T-cell (primary cell): ENCODE measurements at regions of chr11 and their contacts with region 1.

Region 1: DNA sequence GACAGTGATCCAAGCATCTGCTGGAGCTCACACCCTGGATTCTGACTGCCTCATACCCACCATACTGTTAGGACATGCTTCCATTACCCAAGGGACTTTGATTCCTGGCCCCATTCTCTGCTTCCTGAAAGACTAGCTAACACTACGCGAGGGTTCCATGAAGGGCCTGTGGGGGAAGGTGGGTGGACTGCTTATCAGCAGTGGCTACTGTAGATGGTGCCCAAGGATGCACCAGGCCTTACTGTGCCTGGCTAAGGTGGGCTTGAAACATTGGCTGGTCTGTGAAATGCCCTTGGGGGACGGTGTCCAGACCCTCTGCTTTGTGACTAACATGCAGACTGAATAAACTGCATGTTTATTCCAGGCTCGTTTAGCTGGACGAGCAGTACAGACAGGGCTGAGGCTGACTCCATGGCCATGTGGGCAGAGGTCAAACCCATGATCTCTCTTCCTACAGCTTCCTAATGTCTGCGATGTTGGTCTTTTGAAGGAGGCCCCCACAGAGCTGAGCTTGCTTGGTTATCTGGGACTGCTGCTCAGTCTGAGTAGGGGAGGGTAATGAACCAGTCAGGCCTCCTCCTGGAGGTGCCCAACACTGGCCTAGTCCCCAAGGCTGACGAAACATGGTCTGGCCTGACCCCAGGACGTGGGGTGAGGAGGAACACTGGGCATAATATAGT is 48.3 kb upstream of the PHOX2A start:
- DNase-seq: no peak
- ATAC-seq: no peak
- H3K4me3 ChIP-seq: no peak overlapping the region
- H3K4me3 Mint-ChIP-seq: no peak overlapping the region
- H3K27ac ChIP-seq: no peak overlapping the region
- H3K27ac Mint-ChIP-seq: no peak overlapping the region
- H3K4me1 ChIP-seq: no peaks in the 10 kb centered on the region
- H3K4me1 Mint-ChIP-seq: no peaks in the 10 kb centered on the region
- H3K27me3 ChIP-seq: no peaks in the 10 kb centered on the region
- H3K27me3 Mint-ChIP-seq: no peaks in the 10 kb centered on the region

Region 2: GRCh38 chr11:72446902-72447769 is 154.9 kb after region 1 on chr11:
- CTCF ChIA-PET with region 1: interaction called in 1 of 2 experiments, 12 read pairs
- POLR2A ChIA-PET with region 1: no interaction called
- DNase-seq: peak in 2 of 35 experiments; percentile 26 to 65
- ATAC-seq: peak; percentile 54 to 68 (median 55)
- H3K4me3 ChIP-seq: no peak overlapping the region
- H3K4me3 Mint-ChIP-seq: no peak overlapping the region
- H3K27ac ChIP-seq: no peak overlapping the region
- H3K27ac Mint-ChIP-seq: no peak overlapping the region
- H3K4me1 ChIP-seq: no peaks in the 10 kb centered on the region
- H3K4me1 Mint-ChIP-seq: peaks cover 0 to under 1% (median 0%) of the 10 kb centered on the region in 3 donors
- H3K27me3 ChIP-seq: peaks cover 0 to 6% of the 10 kb centered on the region in 2 experiments
- H3K27me3 Mint-ChIP-seq: peaks cover 9 to 11% of the 10 kb centered on the region in 2 donors